Right ventricle myocardium inferior (tissue), 1 donor: ENCODE measurements at regions of chr16 and their contacts with region 1.

Region 1: DNA sequence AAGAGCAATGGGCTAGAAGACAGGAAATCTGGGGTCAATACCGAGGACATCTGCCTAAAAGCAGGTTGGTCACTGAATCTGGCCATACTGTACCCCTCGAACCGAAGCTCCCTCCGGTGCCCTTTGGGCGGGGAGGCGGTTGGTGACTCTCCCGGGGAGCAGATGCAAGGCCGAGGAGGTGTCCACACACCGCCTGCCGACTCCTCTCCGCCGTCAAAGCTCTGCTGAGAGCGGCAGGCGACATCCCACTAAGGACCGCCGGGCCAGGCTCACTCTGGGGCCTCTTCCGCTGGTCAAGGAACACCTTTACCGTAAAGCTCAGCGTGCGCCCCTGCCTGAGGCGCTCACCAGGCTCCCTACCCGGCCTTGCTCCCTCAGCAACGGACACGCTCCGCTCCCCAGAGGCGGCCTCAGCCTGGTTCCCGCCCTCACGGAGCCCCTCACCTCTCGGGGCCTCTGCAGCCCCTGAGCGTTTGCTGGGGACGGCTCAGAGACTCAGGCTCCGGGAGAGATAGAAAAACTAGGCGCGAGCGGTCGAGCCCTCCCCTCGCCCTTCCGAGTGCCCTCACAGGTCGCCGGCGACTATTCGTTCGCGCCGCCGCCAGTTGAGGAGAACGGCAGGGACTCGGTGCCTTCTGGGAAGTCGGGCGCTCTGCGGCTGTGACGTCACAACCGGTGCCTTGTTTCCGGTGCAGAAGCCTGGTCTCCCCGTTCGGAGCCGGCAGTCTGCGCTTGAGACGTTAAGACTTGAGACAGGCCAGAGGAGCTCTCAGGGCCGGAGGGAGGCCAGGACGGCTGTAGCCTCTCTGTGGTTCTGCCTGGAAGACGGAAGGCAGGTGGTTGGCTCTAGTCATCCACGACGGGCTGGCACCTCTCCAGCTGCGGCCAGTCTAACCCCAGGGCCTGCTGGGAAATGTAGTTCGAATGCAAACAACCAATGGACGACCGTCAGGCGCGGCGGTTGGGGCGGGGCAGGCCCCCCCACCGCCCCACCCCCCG is at the start of gene ZNF200:
- DNase-seq: peak; percentile 99
- ATAC-seq: peak; percentile 99
- total RNA-seq, gene ZNF200: 5.1 TPM

Region 2: GRCh38 chr16:3003582-3004302 is 231.1 kb before region 1 on chr16:
- intact Hi-C with region 1: no loop called
- DNase-seq: peak; percentile 98
- ATAC-seq: peak; percentile 98

Region 3: GRCh38 chr16:3264137-3265036 is 29.5 kb after region 1 on chr16:
- intact Hi-C with region 1: loop called (anchors 2 kb)
- DNase-seq: peak; percentile 97
- ATAC-seq: peak; percentile 95

Region 4: GRCh38 chr16:3305109-3306068 is 70.5 kb after region 1 on chr16 and contains the starts of genes TIGD7 and ZNF75A:
- intact Hi-C with region 1: loop called (anchors 5 kb)
- DNase-seq: peak; percentile 96
- ATAC-seq: peak; percentile 99
- total RNA-seq, gene TIGD7: 8.4 TPM
- total RNA-seq, gene ZNF75A: 19.0 TPM

Region 5: GRCh38 chr16:3358884-3359283 is 124.0 kb after region 1 on chr16:
- intact Hi-C with region 1: no loop called
- DNase-seq: no peak
- ATAC-seq: no peak

Region 6: GRCh38 chr16:3485821-3486505 is 251.1 kb after region 1 on chr16:
- intact Hi-C with region 1: no loop called
- DNase-seq: no peak
- ATAC-seq: no peak

Region 7: DNA sequence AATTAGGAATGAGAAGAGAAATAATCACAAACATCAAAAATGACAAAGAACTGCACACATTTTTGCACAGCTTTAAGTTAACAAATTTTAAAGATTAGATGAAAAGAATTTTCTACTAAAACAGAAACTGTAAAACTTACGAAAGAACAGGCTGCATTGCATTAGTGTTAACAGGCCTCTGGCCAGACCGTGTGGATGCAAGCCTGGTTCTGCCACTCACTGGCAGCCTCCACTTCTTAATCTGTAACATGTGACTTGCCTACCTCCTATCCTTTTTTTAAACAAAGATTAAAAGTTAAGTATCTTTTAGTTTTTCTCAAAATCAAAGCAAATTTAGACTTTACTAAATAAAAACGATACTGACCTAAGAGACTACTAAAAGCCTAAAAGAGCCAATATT is 608.2 kb after region 1 on chr16:
- intact Hi-C with region 1: no loop called
- DNase-seq: no peak
- ATAC-seq: peak; percentile 46